ENCODE measurements at regions of chr6 and their contacts with region 1.

Region 1: GRCh38 chr6:165987483-165988301 is 180.0 kb downstream of the TBXT start:
- DNase-seq: peak; percentile 88

Region 2: DNA sequence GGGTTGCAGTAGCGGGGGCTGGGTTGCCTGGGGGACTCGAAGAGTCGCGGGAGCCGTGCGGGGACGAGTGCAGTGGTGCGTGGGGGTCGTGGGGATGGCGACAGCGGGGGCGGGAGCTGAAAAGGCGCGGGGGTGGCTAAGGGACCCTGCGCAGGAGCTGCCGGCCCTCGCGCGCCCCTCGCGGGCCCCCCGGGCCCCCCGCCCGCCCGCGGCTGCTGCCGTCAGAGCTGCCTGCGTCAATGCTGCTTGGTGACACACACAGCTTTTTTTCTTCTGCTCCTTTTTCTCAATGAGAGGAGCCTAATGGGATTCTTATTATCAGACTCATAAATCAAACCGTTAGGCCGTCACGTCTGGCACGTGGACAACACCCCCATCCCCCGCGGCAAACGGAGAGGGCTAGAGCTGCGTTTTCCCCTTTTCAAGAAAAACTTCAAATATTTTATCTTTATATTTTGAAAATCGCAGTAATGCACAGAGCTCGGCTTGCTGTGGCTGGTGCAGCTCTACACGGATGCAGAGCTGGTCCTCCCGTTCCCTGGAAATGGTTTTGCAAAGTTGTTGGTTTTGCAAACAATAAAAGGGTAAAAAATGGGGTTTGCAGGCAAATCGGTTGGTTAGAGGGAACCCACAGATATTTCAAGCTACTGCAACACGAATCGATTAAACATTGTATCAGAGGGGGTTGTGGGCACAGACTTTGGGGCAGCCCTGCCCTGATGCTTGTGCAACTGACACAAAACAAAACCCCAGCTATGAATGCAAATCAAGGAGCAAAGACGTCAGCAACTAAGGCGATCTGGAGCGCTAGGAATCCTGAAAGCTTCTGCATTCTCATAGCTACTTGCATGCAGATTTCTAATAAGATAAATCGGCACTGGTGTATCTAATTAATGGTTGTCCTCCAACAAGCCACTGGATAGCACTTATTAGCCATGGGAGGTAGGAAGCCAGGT is 18.5 kb after region 1 on chr6:
- intact Hi-C with region 1: loop called (anchors 1 kb)
- DNase-seq: no peak